OCI-LY7 (cell line): ENCODE measurements at regions of chr20 and their contacts with region 1.

Region 1: GRCh38 chr20:58890518-58891085 is 38.1 kb downstream of the GNAS start:
- DNase-seq: peak; percentile 85
- H3K4me3 ChIP-seq: peak overlapping the region; percentile 90
- H3K27ac ChIP-seq: peak overlapping the region; percentile 84
- H3K4me1 ChIP-seq: peaks cover 58% of the 10 kb centered on the region
- CTCF ChIP-seq: no peak

Region 2: DNA sequence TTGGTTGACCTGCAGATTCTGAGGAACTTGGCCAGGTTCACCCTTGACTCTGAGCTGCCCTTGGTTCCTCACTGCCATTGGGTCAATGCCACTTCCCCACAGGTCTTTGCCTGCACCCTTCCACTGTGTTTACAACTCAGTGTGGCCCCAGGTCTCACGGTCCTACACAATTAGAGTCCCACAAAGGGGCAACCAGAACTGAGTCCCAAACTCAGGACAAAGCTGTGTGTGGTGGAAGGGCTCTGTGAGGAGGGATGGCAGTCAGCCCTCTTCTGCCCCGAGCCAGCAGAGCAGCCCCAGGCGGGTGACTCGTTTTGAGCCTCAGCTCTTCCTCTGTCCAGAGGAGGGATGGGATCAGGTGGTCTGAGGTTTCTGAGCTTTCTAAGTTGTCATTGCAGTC is 128.5 kb before region 1 on chr20:
- CTCF ChIA-PET with region 1: no interaction called
- POLR2A ChIA-PET with region 1: no interaction called
- intact Hi-C with region 1: no loop called
- DNase-seq: no peak
- H3K4me3 ChIP-seq: no peak overlapping the region
- H3K27ac ChIP-seq: no peak overlapping the region
- H3K4me1 ChIP-seq: no peaks in the 10 kb centered on the region
- CTCF ChIP-seq: no peak

Region 3: DNA sequence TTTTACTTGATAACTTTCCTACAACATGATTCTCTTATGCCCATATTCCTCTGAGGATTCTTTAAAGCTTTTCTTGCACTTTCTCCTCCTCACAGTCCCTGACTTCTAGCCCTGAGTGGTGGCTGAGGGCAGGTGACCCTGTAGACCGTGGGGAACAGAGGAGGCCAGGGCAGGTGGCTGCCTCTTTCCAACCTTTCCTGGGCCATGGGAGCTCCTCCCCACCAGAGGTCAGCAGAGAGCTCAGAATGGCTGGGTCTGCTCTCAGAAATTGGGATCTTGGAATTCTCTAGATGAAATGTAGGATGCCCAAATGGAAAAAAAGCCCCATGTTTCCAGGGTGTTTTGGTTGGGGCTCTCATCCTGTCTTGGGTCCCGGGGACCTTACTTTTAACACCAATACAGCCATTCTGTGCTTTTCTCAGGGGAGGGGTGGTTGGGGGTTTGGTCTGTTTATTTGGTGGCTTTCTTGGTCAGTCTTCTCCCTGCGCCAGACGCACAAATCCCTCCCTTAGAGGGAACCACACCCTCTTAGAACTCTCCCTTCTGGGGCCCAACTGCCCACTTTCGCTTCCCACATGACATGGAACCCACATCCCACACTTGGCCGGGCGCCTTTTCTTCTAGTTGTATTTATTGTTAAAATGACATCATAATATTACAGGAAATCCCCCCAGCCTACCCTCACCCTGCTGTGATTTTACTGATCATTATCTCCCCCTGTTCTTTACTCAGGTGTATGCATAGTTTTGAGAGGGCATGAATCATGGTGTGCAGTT is 20.2 kb before region 1 on chr20:
- CTCF ChIA-PET with region 1: no interaction called
- POLR2A ChIA-PET with region 1: no interaction called
- intact Hi-C with region 1: no loop called
- DNase-seq: peak; percentile 65
- H3K4me3 ChIP-seq: no peak overlapping the region
- H3K27ac ChIP-seq: no peak overlapping the region
- H3K4me1 ChIP-seq: peaks cover 16% of the 10 kb centered on the region
- CTCF ChIP-seq: peak; percentile 95

Region 4: GRCh38 chr20:58907399-58908137 is 17.0 kb after region 1 on chr20:
- CTCF ChIA-PET with region 1: no interaction called
- POLR2A ChIA-PET with region 1: no interaction called
- intact Hi-C with region 1: loop called (anchors 1 kb)
- DNase-seq: peak; percentile 98
- H3K4me3 ChIP-seq: peak overlapping the region; percentile 60
- H3K27ac ChIP-seq: peak overlapping the region; percentile 98
- H3K4me1 ChIP-seq: peaks cover 40% of the 10 kb centered on the region
- CTCF ChIP-seq: no peak

Region 5: DNA sequence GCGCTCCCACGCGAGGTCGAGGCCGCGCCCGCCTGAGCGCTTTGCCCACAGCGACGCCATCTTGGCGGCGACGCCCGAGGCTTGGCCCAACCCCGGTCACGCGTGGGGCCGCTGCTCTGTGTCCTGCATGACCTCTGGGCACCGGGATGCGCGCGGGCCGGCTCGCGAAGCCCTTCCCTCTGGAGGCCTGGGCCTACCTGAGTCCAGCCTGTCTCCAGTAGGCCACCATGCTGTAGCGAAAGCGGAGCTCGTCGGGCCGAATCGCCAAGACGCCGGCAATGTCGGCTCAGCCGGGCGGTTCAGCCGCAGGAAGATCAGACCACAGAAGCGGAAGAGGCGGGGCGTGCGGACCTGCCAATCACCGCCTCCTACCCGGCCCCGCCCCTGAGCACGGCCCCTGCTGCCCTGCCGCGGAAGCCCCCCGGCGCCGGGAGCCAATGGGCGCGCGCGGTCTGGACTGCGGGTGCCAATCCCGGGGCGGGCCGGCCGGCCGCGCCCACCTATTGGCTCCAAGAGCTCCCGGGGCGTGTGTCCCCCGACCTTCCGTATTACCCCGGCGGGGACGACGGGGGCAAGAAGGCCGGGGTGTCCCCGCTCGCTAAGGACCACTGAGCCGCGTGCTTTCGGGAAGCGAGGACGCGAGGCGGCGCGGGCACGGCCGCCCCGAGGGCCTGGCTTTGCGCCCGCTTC is 141.6 kb after region 1 on chr20 and contains the start of gene ATP5F1E:
- CTCF ChIA-PET with region 1: no interaction called
- POLR2A ChIA-PET with region 1: interaction called, 3 read pairs
- intact Hi-C with region 1: loop called (anchors 2 kb)
- DNase-seq: peak; percentile 97
- H3K4me3 ChIP-seq: peak within 1 kb of the TSS; percentile 76
- H3K27ac ChIP-seq: peak within 1 kb of the TSS; percentile 72
- H3K4me1 ChIP-seq: peaks cover 49% of the 10 kb centered on the region
- CTCF ChIP-seq: no peak
- total RNA-seq, gene ATP5F1E: 36.7 and 42.4 TPM in 2 replicates

Region 6: GRCh38 chr20:59165891-59166709 is 275.5 kb after region 1 on chr20:
- CTCF ChIA-PET with region 1: no interaction called
- POLR2A ChIA-PET with region 1: no interaction called
- intact Hi-C with region 1: loop called (anchors 5 kb)
- DNase-seq: peak; percentile 38
- H3K4me3 ChIP-seq: peak overlapping the region; percentile 72
- H3K27ac ChIP-seq: peak overlapping the region; percentile 86
- H3K4me1 ChIP-seq: peaks cover 64% of the 10 kb centered on the region
- CTCF ChIP-seq: no peak